Naive thymus-derived CD4-positive, alpha-beta T cell (primary cell): ENCODE measurements at regions of chr4 and their contacts with region 1.

Region 1: GRCh38 chr4:185640811-185641675 is 105.7 kb upstream of the PDLIM3 start:
- DNase-seq: peak in 4 of 9 donors; percentile 2 to 15 (median 5)
- ATAC-seq: no peak
- H3K4me3 ChIP-seq: no peak overlapping the region
- H3K4me3 Mint-ChIP-seq: no peak overlapping the region
- H3K27ac ChIP-seq: no peak overlapping the region
- H3K27ac Mint-ChIP-seq: no peak overlapping the region
- H3K4me1 ChIP-seq: no peaks in the 10 kb centered on the region
- H3K4me1 Mint-ChIP-seq: peaks cover 0 to 5% (median 4%) of the 10 kb centered on the region in 7 donors
- H3K27me3 ChIP-seq: no peaks in the 10 kb centered on the region
- H3K27me3 Mint-ChIP-seq: peaks cover 33 to 50% (median 44%) of the 10 kb centered on the region in 5 donors

Region 2: DNA sequence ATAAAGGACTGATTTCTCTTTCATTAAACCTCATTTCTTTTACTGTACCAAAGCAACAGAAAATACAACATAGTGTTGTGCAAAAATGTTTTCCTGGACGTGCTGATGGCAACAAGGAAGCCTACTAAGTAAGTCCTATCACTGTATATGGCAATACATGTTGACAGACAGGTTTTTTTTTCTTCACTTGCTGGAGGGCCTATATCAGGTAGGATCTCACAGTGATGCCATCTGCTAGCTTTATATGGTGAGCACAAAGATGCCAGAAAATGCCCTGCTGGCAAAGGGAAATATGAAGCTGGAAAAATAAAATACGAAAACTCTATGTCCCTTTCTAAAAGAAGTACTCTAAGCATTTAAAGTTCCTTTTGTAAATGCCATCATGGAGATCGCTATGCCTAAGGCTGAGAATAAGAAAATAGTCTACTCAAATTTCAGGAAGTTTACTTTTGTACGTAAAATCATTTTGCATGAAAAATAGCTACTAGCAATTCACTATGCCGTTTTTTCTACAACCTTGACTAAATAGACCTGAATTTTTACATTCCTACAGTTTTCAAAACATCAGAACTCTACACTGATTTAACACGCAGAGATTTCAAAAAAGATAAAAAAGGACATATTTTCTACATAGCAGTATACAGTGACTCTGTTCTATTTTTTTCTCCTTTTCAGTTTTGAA is 13.4 kb after region 1 on chr4:
- CTCF ChIA-PET with region 1: no interaction called
- POLR2A ChIA-PET with region 1: no interaction called
- intact Hi-C with region 1: no loop called
- DNase-seq: no peak
- ATAC-seq: no peak
- H3K4me3 ChIP-seq: no peak overlapping the region
- H3K4me3 Mint-ChIP-seq: no peak overlapping the region
- H3K27ac ChIP-seq: no peak overlapping the region
- H3K27ac Mint-ChIP-seq: no peak overlapping the region
- H3K4me1 ChIP-seq: no peaks in the 10 kb centered on the region
- H3K4me1 Mint-ChIP-seq: no peaks in the 10 kb centered on the region
- H3K27me3 ChIP-seq: no peaks in the 10 kb centered on the region
- H3K27me3 Mint-ChIP-seq: peaks cover 0 to 27% (median 16%) of the 10 kb centered on the region in 5 donors

Region 3: GRCh38 chr4:186037692-186038658 is 396.9 kb after region 1 on chr4:
- CTCF ChIA-PET with region 1: no interaction called
- POLR2A ChIA-PET with region 1: no interaction called
- intact Hi-C with region 1: loop called (anchors 1 to 2 kb)
- DNase-seq: peak in 4 of 9 donors; percentile 4 to 30 (median 14)
- ATAC-seq: peak; percentile 67
- H3K4me3 ChIP-seq: no peak overlapping the region
- H3K4me3 Mint-ChIP-seq: no peak overlapping the region
- H3K27ac ChIP-seq: no peak overlapping the region
- H3K27ac Mint-ChIP-seq: no peak overlapping the region
- H3K4me1 ChIP-seq: no peaks in the 10 kb centered on the region
- H3K4me1 Mint-ChIP-seq: no peaks in the 10 kb centered on the region
- H3K27me3 ChIP-seq: no peaks in the 10 kb centered on the region
- H3K27me3 Mint-ChIP-seq: peaks cover 11 to 45% (median 34%) of the 10 kb centered on the region in 5 donors

Region 4: GRCh38 chr4:186137196-186137794 is 496.3 kb after region 1 on chr4:
- CTCF ChIA-PET with region 1: interaction called, 3 read pairs
- POLR2A ChIA-PET with region 1: no interaction called
- intact Hi-C with region 1: loop called in 1 of 2 experiments (anchors 5 kb)
- DNase-seq: no peak
- ATAC-seq: no peak
- H3K4me3 ChIP-seq: no peak overlapping the region
- H3K4me3 Mint-ChIP-seq: no peak overlapping the region
- H3K27ac ChIP-seq: no peak overlapping the region
- H3K27ac Mint-ChIP-seq: no peak overlapping the region
- H3K4me1 ChIP-seq: no peaks in the 10 kb centered on the region
- H3K4me1 Mint-ChIP-seq: peaks cover 0 to 17% (median 0%) of the 10 kb centered on the region in 7 donors
- H3K27me3 ChIP-seq: no peaks in the 10 kb centered on the region
- H3K27me3 Mint-ChIP-seq: peaks cover 0 to 21% (median 2%) of the 10 kb centered on the region in 5 donors